ENCODE measurements at regions of chr10 and their contacts with region 1.

Region 1: DNA sequence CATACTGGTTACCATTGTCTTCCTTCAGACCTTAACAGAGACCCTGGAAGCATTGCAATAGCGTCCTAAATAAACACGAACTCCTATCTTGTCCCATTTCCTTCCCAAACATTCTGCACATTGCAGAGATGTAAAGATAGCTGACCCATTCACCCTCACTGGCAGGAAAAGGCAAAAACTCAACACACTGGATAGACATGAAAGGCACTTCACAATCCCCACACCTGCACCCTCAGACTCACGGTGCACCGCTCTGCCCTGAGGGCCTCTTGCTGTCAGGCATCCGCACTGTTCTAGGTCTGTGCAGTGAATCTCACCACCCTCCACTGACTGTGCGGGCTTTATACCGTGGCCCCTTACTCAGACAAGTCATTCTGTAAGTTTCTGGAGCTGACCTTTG is 42.9 kb upstream of the PARD3 start:
- DNase-seq: no peak
- H3K4me3 ChIP-seq: no peak overlapping the region
- H3K27ac ChIP-seq: no peak overlapping the region
- H3K27me3 ChIP-seq: peaks cover 11% of the 10 kb centered on the region
- CTCF ChIP-seq: no peak

Region 2: DNA sequence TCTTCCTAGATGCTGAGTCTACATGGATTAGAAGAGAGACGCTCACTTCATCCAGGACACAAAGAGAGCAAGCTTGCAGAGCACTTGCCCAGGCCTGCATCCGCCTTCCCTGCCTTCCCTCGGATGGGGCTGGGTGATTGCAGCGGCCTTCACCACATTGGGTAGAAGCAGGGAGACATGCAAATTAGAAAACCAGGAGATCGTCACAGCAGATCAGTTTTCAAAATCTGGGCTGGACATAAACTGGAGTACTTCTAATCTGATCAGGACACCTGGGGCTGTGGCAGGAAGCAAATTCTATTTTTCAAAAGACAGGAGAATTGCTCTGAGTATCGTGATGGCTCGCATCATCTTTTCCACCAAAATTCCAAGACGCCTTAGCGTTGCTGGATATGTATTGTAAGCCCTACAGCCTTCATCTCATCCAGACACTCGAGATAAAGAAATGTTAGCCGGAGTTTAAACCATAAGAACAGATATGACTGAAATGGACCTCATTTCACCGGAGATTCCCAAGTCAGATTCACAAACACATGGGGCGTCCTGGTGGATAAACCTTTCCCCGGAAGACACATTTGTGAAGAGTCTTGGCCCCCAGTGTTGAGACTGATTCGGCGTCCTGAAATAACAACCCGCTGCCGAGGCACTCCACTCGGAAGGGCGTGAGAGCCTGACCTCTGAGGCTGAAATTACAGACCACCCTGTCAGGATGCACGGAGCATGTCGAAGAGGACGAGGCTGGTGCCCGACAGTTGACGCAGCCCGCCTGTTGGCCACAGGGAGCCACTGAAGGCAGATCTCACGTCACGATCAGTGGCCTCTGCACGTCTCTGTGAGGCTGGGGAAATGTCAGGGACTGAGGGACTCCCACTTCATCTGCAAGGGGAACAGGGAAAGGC is 48.4 kb after region 1 on chr10:
- CTCF ChIA-PET with region 1: no interaction called
- POLR2A ChIA-PET with region 1: interaction called, 11 read pairs
- DNase-seq: no peak
- H3K4me3 ChIP-seq: no peak overlapping the region
- H3K27ac ChIP-seq: no peak overlapping the region
- H3K27me3 ChIP-seq: no peaks in the 10 kb centered on the region
- CTCF ChIP-seq: no peak